A673 (cell line): ENCODE measurements at regions of chr1 and their contacts with region 1.

Region 1: DNA sequence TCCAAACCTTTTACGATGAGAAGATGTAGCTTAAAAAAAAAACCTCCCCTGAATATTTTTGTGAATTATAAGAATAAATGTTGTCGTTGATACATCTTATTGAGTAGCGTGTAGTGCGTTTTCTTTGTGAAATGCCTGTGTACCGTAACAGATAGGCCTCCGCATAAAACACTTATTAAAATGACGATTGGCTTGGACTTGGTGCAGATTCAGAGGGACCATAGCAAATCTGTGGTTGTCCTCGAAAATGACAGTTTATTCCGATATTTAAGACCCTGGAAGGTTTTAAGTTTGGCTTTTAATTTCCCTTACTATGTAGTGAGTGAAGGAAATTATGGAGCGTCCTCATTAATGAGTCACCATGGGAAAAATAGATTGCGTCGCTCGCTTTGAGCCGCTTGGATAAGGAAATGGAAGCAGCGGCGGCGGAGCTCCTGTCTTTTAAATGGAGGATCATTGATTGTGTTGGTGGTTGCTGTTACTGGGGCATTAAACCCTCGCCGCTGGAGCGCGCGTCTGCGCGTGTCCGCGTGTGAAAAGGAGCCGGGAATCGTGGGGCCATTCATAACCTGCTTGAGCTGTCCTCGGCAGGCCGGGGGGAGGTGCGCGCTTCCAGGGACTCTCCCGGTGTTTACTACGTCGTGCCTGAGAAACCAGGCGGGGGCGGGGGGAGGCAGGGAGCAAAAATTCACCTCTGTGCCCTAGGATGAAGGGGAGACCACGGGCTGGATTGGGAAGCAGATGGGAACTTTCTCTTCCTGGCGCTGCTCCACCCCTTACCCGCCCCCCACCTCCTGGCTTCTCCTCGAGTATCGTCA is 1.7 kb downstream of the SPEN start:
- DNase-seq: peak; percentile 93
- H3K4me3 ChIP-seq: peak overlapping the region; percentile 90
- H3K27ac ChIP-seq: peak overlapping the region; percentile 83
- H3K4me1 ChIP-seq: peaks cover 36% of the 10 kb centered on the region
- H3K27me3 ChIP-seq: no peaks in the 10 kb centered on the region
- CTCF ChIP-seq: no peak

Region 2: GRCh38 chr1:15727021-15727420 is 122.1 kb before region 1 on chr1:
- CTCF ChIA-PET with region 1: interaction called, 10 read pairs
- POLR2A ChIA-PET with region 1: no interaction called
- intact Hi-C with region 1: no loop called
- DNase-seq: no peak
- H3K4me3 ChIP-seq: no peak overlapping the region
- H3K27ac ChIP-seq: no peak overlapping the region
- H3K4me1 ChIP-seq: no peaks in the 10 kb centered on the region
- H3K27me3 ChIP-seq: no peaks in the 10 kb centered on the region
- CTCF ChIP-seq: no peak

Region 3: DNA sequence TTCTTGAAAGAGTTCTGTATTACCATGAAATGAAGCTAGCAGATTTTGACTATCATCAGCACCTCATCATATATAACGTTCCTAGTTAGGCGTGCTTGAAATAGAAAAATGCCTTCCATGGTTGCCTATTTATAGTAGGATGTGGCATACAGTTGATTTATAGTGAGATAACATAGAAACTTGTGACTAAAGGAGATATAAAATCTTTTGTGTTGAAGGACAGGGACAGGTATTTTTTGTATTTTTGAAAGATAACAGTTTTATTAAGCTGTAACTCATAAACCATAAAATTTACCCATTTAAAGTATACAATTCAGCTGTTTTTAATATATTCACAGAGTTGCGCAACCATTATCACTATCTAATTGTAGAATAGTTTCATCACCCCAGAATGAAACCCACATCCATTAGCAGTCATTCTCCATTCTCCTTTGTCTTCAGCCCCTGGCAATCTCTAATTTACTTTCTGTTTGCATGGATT is 17.6 kb after region 1 on chr1:
- CTCF ChIA-PET with region 1: no interaction called
- POLR2A ChIA-PET with region 1: interaction called, 16 read pairs
- intact Hi-C with region 1: no loop called
- DNase-seq: peak; percentile 53
- H3K4me3 ChIP-seq: no peak overlapping the region
- H3K27ac ChIP-seq: peak overlapping the region; percentile 10
- H3K4me1 ChIP-seq: peaks cover 10% of the 10 kb centered on the region
- H3K27me3 ChIP-seq: no peaks in the 10 kb centered on the region
- CTCF ChIP-seq: no peak

Region 4: DNA sequence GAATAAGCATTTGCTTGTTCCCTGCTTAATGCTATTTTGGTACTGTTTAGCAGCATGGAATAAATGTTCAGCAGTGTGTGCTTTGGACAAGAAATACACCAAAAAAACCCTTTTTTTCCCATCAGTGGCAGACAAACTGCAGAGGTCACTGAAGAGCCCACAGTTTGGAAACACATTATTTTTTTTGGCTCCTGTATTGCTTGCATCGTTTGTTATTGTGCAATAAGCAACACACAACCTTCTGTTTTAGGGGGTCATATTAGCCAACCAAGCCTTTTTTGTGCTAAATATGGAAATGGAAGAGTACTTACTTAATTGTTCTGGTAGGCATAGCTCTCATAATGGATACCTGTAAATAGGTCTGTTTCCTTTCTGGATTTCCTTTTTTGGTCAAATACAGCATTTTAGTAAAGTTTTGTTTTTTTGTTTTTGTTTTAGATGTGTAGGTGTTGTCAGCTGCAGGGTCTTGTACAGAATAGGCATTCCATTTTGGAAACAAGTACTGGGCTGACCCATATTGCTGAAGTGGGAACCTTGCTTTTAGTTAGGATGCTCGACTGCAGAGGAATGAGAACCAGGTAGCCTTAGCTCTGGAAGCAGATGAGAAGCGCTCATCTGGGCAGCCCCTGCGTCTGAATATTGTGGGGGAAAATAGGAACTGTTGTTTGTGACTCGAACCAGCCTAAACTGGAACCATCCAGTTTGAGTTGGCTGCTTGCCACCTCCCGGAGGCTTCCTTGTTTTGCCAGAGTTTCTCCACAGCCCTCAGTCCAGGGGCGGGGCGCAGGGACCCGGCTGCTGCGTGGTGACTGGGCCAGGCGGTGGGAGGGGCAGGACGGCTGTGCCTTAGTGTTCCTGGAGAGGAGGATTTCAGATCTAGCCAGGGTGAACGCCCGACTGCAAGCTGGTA is 36.8 kb after region 1 on chr1:
- CTCF ChIA-PET with region 1: no interaction called
- POLR2A ChIA-PET with region 1: interaction called, 4 read pairs
- intact Hi-C with region 1: loop called (anchors 5 kb)
- DNase-seq: peak; percentile 96
- H3K4me3 ChIP-seq: peak overlapping the region; percentile 36
- H3K27ac ChIP-seq: peak overlapping the region; percentile 74
- H3K4me1 ChIP-seq: peaks cover 35% of the 10 kb centered on the region
- H3K27me3 ChIP-seq: no peaks in the 10 kb centered on the region
- CTCF ChIP-seq: peak; percentile 29; the same call in 1 of the 2 replicates

Region 5: DNA sequence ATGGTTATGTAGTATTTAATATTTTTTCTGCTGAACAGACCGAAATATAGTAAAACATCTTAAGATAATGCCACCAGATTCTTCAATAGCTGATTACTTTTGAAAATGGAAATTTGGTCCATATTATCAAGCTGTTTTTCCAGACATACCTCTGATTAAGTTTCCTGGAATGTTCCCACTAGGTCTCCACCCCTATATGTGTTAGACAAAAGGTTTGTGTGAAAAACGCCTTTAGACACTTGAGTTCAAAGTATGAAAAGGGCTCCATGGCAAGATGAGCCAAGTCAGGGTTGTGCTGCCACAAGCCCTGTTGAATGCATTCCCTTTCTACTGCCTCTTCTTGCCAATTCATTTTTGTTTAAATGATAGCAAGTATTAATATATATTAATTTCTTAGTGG is 74.1 kb after region 1 on chr1:
- CTCF ChIA-PET with region 1: no interaction called
- POLR2A ChIA-PET with region 1: no interaction called
- intact Hi-C with region 1: no loop called
- DNase-seq: no peak
- H3K4me3 ChIP-seq: no peak overlapping the region
- H3K27ac ChIP-seq: no peak overlapping the region
- H3K4me1 ChIP-seq: peaks cover 16% of the 10 kb centered on the region
- H3K27me3 ChIP-seq: no peaks in the 10 kb centered on the region
- CTCF ChIP-seq: no peak